ENCODE measurements at regions of chr22 and their contacts with region 1.

Region 1: GRCh38 chr22:29072193-29072978 is 449 bp upstream of the KREMEN1 start:
- DNase-seq: peak; percentile 98 to 99
- H3K4me3 ChIP-seq: peak overlapping the region; percentile 49
- H3K4me3 Mint-ChIP-seq: peak overlapping the region; percentile 73
- H3K27ac Mint-ChIP-seq: peak overlapping the region; percentile 84
- H3K4me1 ChIP-seq: peaks cover 46% of the 10 kb centered on the region
- H3K4me1 Mint-ChIP-seq: peaks cover 40% of the 10 kb centered on the region
- H3K27me3 ChIP-seq: no peaks in the 10 kb centered on the region
- H3K27me3 Mint-ChIP-seq: no peaks in the 10 kb centered on the region
- CTCF ChIP-seq: no peak

Region 2: DNA sequence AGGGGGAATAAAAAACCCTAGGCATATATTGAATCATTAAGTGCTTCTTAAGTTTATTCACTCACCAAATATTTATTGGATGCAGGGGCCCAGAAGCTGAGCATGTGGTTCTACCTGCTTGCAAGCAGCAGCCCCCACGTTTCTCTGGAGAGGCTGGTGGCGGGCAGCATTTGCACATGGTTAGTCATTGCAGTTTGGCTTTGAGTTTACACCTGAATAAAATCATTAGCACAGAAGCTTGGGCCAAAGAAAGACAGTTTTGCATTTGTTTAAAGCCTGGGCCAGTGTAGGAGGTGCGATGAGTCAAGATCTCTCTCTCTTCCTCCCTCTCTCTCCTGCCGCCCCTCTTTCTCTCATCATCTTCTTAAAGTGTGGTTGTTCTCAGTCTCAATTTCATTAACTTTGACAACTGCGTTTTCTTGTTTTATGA is 83.3 kb before region 1 on chr22:
- CTCF ChIA-PET with region 1: no interaction called
- POLR2A ChIA-PET with region 1: no interaction called
- intact Hi-C with region 1: no loop called
- DNase-seq: no peak
- H3K4me3 ChIP-seq: no peak overlapping the region
- H3K4me3 Mint-ChIP-seq: no peak overlapping the region
- H3K27ac Mint-ChIP-seq: no peak overlapping the region
- H3K4me1 ChIP-seq: peaks cover 38% of the 10 kb centered on the region
- H3K4me1 Mint-ChIP-seq: peaks cover 39% of the 10 kb centered on the region
- H3K27me3 ChIP-seq: no peaks in the 10 kb centered on the region
- H3K27me3 Mint-ChIP-seq: no peaks in the 10 kb centered on the region
- CTCF ChIP-seq: no peak

Region 3: DNA sequence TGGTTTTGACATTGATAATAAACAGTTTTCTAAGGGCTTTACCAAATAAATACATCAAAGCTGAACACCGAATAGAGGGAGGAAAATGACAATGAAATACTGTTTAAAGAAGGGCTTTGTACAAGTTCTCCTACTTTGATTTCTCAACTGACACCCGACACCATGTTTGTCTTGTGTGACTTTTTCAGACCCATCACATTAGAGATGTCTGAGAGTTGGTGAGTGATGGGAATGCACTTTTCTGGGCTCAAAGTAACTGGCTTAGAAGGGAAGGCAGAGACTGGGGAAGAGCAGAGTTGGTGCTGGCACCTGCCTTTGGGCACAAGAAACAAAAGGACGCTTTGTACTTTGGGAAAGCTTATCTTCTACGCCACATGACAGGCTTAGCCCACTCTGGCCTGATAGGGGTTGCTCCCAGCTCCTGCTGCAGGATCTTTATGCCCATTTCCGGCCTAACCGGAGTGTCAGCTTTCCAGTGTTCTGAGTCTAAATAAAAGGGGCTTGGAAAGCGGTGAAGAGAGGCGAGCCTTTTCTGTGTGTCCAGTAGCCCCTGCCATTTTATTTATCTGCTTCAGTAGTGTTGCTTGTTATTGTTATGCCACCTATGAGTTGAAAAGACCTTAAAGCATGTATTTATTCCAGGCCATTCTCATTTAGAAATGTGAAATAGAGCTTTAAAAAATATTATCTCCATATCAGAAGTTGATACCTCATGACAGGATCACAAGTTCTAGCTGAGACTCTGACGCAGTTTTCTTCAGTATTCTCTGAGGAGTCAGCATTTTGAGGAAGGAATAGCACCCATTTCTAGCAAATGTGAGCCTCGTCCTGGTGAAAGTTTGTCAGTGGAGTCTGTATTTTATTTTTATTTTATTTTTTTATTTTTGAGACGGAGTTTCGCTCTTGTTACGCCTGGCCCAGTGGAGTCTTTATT is 24.6 kb after region 1 on chr22:
- CTCF ChIA-PET with region 1: interaction called, 4 read pairs
- POLR2A ChIA-PET with region 1: interaction called, 12 read pairs
- intact Hi-C with region 1: no loop called
- DNase-seq: peak; percentile 39 to 54
- H3K4me3 ChIP-seq: no peak overlapping the region
- H3K4me3 Mint-ChIP-seq: peak overlapping the region; percentile 0
- H3K27ac Mint-ChIP-seq: peak overlapping the region; percentile 5
- H3K4me1 ChIP-seq: peaks cover 26% of the 10 kb centered on the region
- H3K4me1 Mint-ChIP-seq: peaks cover 16% of the 10 kb centered on the region
- H3K27me3 ChIP-seq: no peaks in the 10 kb centered on the region
- H3K27me3 Mint-ChIP-seq: no peaks in the 10 kb centered on the region
- CTCF ChIP-seq: no peak

Region 4: GRCh38 chr22:29117799-29118477 is 45.6 kb after region 1 on chr22:
- CTCF ChIA-PET with region 1: no interaction called
- POLR2A ChIA-PET with region 1: no interaction called
- intact Hi-C with region 1: loop called (anchors 5 kb)
- DNase-seq: peak in 1 of 2 experiments; percentile 30
- H3K4me3 ChIP-seq: no peak overlapping the region
- H3K4me3 Mint-ChIP-seq: no peak overlapping the region
- H3K27ac Mint-ChIP-seq: no peak overlapping the region
- H3K4me1 ChIP-seq: peaks cover 21% of the 10 kb centered on the region
- H3K4me1 Mint-ChIP-seq: peaks cover 22% of the 10 kb centered on the region
- H3K27me3 ChIP-seq: no peaks in the 10 kb centered on the region
- H3K27me3 Mint-ChIP-seq: no peaks in the 10 kb centered on the region
- CTCF ChIP-seq: no peak

Measured in Caco-2 (cell line).